BJ (cell line): ENCODE measurements at regions of chr13 and their contacts with region 1.

Region 1: GRCh38 chr13:46160471-46161066 is 21.4 kb downstream of the LCP1 start:
- DNase-seq: peak; percentile 4
- H3K4me3 ChIP-seq: no peak overlapping the region
- H3K27me3 ChIP-seq: peaks cover 1% of the 10 kb centered on the region
- CTCF ChIP-seq: peak; percentile 74

Region 2: DNA sequence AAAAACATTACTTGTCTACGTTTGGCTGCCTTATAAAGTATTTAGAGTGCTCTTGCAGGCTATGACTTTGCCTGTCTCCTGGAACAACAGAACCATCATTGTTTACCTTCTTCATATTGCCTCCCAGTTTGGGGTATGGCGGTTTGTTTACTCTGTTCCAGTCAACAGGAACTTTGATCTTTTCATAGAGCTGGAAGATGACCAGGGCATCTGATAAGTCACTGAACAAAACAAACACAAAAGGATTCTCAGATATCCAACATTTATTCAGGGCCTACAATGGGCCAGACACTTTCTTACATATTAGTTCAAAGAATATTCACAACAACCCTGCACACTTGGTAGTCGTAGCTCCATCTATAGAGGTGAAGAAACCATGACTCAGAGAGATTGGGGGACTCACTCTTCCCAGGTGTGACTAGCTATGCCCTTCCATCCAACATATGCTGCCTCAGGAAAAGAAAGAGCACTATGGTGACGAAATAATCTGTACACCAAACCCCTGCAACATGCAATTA is 17.3 kb before region 1 on chr13:
- CTCF ChIA-PET with region 1: interaction called, 31 read pairs
- POLR2A ChIA-PET with region 1: no interaction called
- DNase-seq: no peak
- H3K4me3 ChIP-seq: no peak overlapping the region
- H3K27me3 ChIP-seq: no peaks in the 10 kb centered on the region; the same call in 1 of the 2 replicates
- CTCF ChIP-seq: no peak

Region 3: GRCh38 chr13:46172531-46172991 is 12.0 kb after region 1 on chr13:
- CTCF ChIA-PET with region 1: interaction called, 12 read pairs
- POLR2A ChIA-PET with region 1: no interaction called
- DNase-seq: no peak
- H3K4me3 ChIP-seq: no peak overlapping the region
- H3K27me3 ChIP-seq: peaks cover 1% of the 10 kb centered on the region
- CTCF ChIP-seq: no peak

Region 4: GRCh38 chr13:46321494-46322225 is 161.1 kb after region 1 on chr13:
- CTCF ChIA-PET with region 1: interaction called, 10 read pairs
- POLR2A ChIA-PET with region 1: no interaction called
- DNase-seq: no peak
- H3K4me3 ChIP-seq: no peak overlapping the region
- H3K27me3 ChIP-seq: no peaks in the 10 kb centered on the region
- CTCF ChIP-seq: peak; percentile 85